Stomach (tissue), 19 donors: ENCODE measurements at regions of chr14 and their contacts with region 1.

Region 1: DNA sequence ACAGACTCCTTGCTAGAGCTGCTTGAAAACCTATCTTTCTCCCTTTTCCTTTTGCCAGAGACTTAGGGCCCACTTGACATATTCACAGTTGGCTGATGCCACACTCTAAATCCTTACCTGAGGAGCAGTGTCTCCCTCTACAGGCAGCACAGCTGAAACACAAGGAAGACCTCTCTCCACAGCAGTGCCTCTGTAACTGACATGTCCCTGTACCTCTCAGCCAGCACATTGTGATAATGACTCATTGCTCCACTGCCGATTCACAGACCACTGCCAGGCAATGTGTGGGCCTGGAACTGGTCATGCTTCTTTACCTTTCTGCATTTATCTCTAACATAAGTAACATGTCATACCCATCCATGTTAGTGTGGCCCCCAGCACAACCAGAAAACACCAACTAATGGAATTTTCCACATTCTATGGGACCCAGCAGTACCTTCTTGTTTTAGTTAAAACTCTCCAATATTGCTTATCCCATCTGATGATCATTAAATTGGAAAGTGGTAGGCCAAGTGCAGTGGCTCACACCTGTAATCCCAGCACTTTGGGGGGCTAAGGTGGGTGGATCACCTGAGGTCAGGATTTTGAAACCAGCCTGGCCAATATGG is 56.5 kb downstream of the GTF2A1 start:
- DNase-seq: peak; percentile 46 to 66
- H3K4me3 ChIP-seq: no peak overlapping the region
- H3K27ac ChIP-seq: no peak overlapping the region
- H3K4me1 ChIP-seq: peaks cover 1 to 4% (median 3%) of the 10 kb centered on the region in 4 donors
- H3K27me3 ChIP-seq: no peaks in the 10 kb centered on the region
- CTCF ChIP-seq: peak in 3 of 7 experiments; percentile 19 to 39 (median 26)
- EP300 ChIP-seq: no peak
- POLR2A ChIP-seq: no peak

Region 2: DNA sequence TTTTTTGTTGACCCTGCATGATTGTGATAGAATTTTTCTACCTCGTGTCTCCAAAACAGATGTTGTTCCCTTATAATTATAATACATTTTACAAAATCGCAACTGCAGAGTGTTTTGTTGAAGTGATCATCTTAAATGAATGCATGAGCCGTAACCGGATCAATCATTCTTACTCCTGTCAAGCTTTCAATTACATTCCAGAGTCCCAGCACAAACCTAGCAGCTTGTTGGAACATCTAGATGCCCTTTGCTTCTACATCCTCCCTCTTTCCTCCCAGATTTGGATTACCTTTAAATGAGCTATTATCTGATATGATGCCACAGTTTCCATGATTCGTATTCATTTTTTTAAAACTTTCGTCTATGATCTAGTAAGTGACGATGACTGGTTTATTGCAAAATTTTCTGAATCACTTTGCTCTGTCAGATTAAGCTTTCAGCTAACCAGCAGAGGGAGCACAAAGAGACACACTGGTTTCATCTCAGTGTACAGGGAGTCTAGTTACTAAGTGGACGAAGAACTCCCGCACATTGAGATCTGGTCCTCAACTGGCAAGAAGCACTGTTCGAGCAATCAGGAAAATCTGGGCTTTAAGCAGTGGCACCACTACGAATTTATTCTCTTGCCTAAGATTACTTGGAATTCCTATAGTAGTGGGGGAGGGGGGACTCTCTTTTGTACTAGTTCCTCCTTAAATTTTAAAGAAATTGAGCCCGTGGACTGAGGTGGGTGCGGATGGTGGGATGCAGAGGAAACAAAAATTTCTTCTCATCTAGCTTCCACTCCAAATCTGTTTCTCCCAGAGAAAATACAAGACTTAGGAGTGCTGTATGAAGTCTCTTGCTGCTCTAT is 168.0 kb before region 1 on chr14:
- intact Hi-C with region 1: loop called (anchors 10 kb)
- DNase-seq: peak in 1 of 2 donors; percentile 76
- H3K4me3 ChIP-seq: no peak overlapping the region
- H3K27ac ChIP-seq: no peak overlapping the region
- H3K4me1 ChIP-seq: peaks cover 0 to 8% (median 0%) of the 10 kb centered on the region in 4 donors
- H3K27me3 ChIP-seq: peaks cover 0 to 19% (median 0%) of the 10 kb centered on the region in 3 donors
- CTCF ChIP-seq: peak in 5 of 7 experiments; percentile 20 to 66 (median 51)
- EP300 ChIP-seq: no peak
- POLR2A ChIP-seq: no peak